K562 (cell line): ENCODE measurements at regions of chr6 and their contacts with region 1.

Region 1: DNA sequence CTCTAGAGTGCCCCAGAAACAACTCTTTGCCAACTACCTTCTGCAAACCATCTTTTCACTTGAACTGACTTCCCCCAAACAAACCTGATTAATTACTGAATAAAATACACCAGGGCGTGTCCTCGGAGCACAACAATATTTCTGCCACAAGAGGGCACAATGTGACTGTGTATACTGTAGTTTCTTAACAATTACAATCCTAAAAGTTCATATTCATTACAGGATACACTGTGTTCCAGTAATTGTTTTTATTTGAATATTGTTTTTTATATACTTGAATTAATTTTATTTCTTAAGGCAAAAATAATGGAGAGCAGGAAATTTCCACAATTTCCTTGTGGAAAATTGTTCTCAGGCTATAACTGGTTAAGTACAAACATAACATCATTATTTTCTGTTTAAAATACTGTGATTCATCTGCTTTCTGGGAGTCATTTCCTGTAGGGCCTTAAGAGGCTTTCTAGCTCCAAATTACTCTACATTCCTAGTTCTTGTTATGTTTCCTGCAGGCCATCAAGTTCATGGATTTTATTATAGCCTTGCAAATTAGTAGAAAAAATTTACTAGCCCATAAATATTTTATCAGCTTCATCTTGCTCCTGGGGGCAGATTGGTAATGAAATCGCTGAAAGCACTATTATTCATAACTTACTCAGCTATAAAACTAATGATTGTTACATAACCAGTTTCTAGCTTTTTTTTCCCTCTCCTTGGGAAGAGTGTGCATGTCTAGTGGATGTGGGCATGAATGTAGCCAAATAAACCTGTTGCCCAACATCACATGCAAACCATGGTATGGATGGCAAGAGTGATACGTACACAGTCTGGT is 51.9 kb upstream of the SLC22A16 start:
- DNase-seq: peak; percentile 51 to 70 (median 56)
- ATAC-seq: peak; percentile 91
- H3K4me3 ChIP-seq: no peak overlapping the region
- H3K27ac ChIP-seq: no peak overlapping the region
- H3K4me1 ChIP-seq: no peaks in the 10 kb centered on the region; a peak in 1 of 5 replicates
- H3K27me3 ChIP-seq: peaks cover 5 to 13% of the 10 kb centered on the region in 2 experiments; a peak in 3 of 5 replicates
- CTCF ChIP-seq: peak; percentile 44 to 87 (median 73); a peak in 5 of 6 replicates
- EP300 ChIP-seq: no peak
- POLR2A ChIP-seq: no peak
- RAD21 ChIP-seq: peak; percentile 90 to 92

Region 2: GRCh38 chr6:110999634-111000270 is 471.4 kb after region 1 on chr6:
- CTCF ChIA-PET with region 1: interaction called, 12 read pairs
- POLR2A ChIA-PET with region 1: no interaction called
- in situ Hi-C with region 1: no loop called
- intact Hi-C with region 1: loop called (anchors 2 kb)
- DNase-seq: peak in 1 of 4 experiments; percentile 11
- ATAC-seq: peak; percentile 62
- H3K4me3 ChIP-seq: no peak overlapping the region
- H3K27ac ChIP-seq: no peak overlapping the region
- H3K4me1 ChIP-seq: no peaks in the 10 kb centered on the region; a peak in 1 of 5 replicates
- H3K27me3 ChIP-seq: no peaks in the 10 kb centered on the region
- CTCF ChIP-seq: peak in 1 of 3 experiments; percentile 52; a peak in 2 of 6 replicates
- EP300 ChIP-seq: no peak
- POLR2A ChIP-seq: no peak
- RAD21 ChIP-seq: peak; percentile 70 to 71